GM10248 (cell line): ENCODE measurements at regions of chr4 and their contacts with region 1.

Region 1: GRCh38 chr4:57442831-57443291 is 332.7 kb upstream of the IGFBP7 start:
- DNase-seq: peak; percentile 16
- CTCF ChIP-seq: peak; percentile 76

Region 2: DNA sequence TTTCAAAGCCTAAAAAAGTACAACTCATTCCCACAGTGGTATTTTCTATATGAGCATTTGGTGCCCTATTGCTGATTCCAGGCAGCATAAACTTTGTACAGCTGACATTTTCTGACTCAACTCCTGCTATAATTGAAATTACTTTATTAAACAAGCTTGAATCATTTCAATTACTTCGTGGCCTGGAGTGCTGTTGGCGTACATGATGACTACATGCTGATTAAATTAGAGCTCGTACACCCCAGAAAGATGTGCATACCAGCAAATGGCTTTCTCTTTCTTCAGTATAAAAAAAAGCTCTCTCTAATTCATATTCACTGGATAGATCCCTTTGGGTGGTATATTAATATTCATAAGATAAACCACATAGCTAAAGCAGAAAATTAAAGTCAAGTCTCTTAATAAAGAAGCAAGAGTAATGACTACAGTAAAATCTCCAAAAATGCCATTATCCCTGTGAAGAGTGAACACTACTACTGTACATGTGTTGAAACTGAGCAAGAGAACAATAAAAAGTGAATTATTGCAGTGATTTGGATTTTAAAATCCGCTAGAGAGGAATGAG is 87.7 kb before region 1 on chr4:
- CTCF ChIA-PET with region 1: no interaction called
- POLR2A ChIA-PET with region 1: no interaction called
- DNase-seq: no peak
- CTCF ChIP-seq: no peak

Region 3: DNA sequence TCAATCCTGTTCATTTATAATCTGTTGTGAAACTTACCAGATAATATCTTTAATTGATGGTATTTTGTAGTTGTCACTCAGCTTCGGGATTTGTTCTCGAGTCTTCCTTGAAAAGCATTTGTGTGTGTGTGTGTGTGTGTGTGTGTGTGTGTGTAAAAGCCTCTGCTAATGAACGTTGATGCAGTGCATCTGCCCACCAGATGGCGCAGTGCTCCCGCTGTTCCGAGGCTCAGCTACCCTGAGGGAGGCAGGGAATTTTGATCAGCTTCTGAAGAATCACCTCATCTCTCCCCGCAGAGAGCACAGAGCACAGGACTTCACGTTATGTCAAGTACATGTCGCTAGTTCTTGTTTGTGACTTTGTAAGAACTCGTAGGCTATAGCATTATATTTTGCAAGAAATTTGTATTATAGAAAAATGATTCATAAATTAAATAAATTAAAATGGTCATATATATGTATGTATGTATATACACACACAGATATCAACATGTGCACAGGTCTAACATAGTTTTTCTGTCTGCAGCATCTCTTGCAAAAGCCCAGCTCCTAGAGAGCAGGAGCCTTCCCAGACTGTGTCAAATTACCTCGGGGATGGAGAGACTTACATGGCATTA is 16.0 kb before region 1 on chr4:
- CTCF ChIA-PET with region 1: interaction called, 19 read pairs
- POLR2A ChIA-PET with region 1: no interaction called
- DNase-seq: peak; percentile 55
- CTCF ChIP-seq: peak; percentile 80